PC-9 (cell line): ENCODE measurements at regions of chr12 and their contacts with region 1.

Region 1: DNA sequence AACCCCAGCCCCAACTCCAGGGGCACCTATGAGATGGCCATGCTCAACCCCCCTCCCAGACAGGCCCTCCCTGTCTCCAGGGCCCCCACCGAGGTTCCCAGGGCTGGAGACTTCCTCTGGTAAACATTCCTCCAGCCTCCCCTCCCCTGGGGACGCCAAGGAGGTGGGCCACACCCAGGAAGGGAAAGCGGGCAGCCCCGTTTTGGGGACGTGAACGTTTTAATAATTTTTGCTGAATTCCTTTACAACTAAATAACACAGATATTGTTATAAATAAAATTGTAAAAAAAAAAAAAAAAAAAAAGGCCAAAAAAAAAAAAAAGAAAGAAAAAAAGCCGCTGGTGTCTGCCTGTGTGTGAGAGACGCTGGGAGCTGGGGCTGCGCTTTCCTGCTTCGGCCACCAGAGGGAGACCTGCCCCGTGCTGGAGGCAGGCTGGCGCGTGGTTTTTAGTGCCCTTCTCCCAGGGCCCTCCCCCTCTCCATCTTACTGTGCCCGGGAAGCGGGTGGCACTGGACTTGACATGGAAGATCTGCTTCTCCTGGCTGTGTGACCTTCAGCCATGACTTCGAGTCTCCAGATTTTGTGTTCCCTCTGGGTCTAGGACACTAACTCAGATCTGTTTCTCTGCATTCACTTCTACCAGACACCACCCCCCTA is 3.4 kb upstream of the NXPH4 start:
- DNase-seq: peak; percentile 69 to 92
- H3K4me3 ChIP-seq: peak overlapping the region; percentile 36; the same call in 1 of the 2 replicates
- H3K27ac ChIP-seq: peak overlapping the region; percentile 60
- H3K4me1 ChIP-seq: peaks cover 17% of the 10 kb centered on the region
- H3K27me3 ChIP-seq: no peaks in the 10 kb centered on the region
- CTCF ChIP-seq: peak; percentile 92

Region 2: DNA sequence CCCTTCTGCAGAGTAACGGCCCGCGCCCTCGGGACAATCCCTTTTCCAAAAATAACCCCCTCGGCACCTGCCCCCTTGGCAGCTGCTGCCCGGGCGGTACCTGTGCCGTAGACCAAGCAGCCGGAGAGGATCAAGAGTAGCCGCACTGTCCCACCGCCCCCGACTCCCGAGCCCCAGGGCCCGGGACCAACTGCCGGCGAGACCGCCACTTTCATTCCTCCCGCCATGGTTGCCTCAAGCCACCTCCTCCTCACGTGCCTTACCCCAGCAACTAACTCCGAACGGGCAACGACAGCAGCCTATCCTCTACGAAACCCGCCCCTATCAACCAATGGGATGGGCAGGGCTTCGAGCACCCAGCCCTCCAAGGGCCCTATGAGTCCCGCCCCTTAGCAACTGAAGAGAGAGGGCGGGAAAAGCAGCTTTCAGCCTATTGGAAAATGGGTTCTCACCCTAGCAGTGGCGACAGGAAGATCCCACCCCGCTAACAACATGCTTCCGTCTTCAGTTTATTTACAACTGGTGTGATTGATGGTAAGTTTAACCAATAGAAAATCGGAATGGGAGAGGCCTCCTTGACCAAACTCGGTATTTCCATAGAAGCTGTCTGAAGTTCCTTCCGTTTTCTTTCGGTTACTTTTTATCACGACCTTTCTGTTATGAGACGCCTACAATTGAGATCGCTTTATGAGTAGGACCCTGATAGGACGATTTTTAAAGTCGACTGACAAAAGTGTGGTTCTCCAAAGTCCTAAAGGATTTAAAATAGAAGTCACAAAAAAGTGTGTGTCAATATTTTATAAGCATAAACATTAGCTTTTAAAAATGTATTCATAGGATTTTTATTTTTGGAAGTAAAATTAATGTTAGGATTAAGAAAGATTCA is 134.4 kb before region 1 on chr12 and contains the start of gene NEMP1:
- CTCF ChIA-PET with region 1: interaction called, 3 read pairs
- POLR2A ChIA-PET with region 1: interaction called, 33 read pairs
- intact Hi-C with region 1: no loop called
- DNase-seq: peak; percentile 96 to 100
- H3K4me3 ChIP-seq: peak within 1 kb of the TSS; percentile 90
- H3K27ac ChIP-seq: peak within 1 kb of the TSS; percentile 59
- H3K4me1 ChIP-seq: peaks cover 13% of the 10 kb centered on the region
- H3K27me3 ChIP-seq: no peaks in the 10 kb centered on the region
- CTCF ChIP-seq: no peak
- total RNA-seq, gene NEMP1: 28.9 and 36.6 TPM in 2 replicates

Region 3: GRCh38 chr12:57148469-57149244 is 64.5 kb before region 1 on chr12:
- CTCF ChIA-PET with region 1: no interaction called
- POLR2A ChIA-PET with region 1: interaction called, 25 read pairs
- intact Hi-C with region 1: no loop called
- DNase-seq: no peak
- H3K4me3 ChIP-seq: no peak overlapping the region
- H3K27ac ChIP-seq: no peak overlapping the region
- H3K4me1 ChIP-seq: peaks cover 8% of the 10 kb centered on the region
- H3K27me3 ChIP-seq: no peaks in the 10 kb centered on the region
- CTCF ChIP-seq: no peak

Region 4: DNA sequence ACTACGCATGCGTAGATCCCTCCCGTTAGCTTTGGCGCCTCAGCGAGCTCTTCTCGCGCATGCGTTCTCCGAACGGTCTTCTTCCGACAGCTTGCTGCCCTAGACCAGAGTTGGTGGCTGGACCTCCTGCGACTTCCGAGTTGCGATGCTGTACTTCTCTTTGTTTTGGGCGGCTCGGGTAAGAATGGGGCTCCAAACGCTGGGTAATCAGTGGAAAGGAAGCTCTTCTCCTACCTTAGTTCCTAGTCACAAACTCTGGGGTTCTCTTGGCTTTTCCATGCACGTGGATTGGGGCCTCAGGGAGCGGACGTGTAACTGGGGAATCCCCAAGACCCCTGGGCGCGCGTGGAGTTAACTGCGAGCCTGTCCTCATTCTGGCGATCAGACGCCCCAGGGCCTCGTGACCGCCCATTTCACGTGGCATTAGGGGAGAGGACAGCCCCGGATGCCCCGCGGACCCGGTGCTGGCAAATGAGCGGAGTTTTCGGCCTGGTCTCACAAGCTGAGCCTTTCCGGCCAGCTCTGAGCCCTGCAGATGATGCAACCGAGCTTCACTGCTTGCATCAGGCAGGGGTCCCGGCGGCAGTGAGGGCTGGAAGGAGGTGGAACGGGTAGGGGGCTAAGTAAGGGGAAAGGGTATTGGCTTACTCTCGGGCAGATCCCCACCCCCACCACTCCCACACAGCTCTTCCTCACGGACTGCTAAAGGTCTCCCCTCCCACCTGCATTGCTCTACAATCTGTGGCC is 16.6 kb after region 1 on chr12 and contains the start of gene SHMT2:
- CTCF ChIA-PET with region 1: interaction called, 30 read pairs
- POLR2A ChIA-PET with region 1: interaction called, 3 read pairs
- intact Hi-C with region 1: no loop called
- DNase-seq: peak; percentile 87 to 91
- H3K4me3 ChIP-seq: peak within 1 kb of the TSS; percentile 95
- H3K27ac ChIP-seq: peak within 1 kb of the TSS; percentile 97
- H3K4me1 ChIP-seq: peaks cover 30% of the 10 kb centered on the region
- H3K27me3 ChIP-seq: no peaks in the 10 kb centered on the region
- CTCF ChIP-seq: no peak
- total RNA-seq, gene SHMT2: 220 and 227 TPM in 2 replicates

Region 5: DNA sequence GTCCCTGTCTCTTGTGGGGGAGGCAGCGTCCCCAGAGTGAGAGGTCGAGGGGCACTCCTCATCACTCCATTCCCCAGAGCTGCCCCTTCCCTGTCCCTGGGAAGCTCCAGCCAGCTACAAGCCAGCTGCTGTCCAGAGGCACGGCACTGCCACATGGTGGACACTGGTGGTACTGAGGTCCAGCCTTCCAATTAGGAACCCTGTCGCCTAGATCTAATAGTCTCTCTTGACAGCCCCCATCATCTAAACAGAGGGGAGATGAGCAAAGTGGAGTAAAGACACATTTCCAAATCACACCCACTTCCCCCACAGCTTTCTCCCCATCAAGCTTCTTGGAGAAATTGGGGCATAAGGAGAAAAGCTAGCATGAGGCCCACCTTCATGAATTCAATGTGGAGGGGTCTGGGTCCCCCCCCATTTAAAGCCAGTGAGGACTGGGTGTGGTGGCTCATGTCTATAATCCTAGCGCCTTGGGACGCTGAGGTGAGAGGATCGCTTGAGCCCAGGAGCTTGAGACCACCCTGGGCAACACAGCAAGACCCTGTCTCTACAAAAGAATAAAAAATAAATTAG is 239.8 kb after region 1 on chr12:
- CTCF ChIA-PET with region 1: interaction called, 6 read pairs
- POLR2A ChIA-PET with region 1: no interaction called
- intact Hi-C with region 1: loop called (anchors 2 kb)
- DNase-seq: peak; percentile 47 to 73
- H3K4me3 ChIP-seq: no peak overlapping the region
- H3K27ac ChIP-seq: no peak overlapping the region
- H3K4me1 ChIP-seq: peaks cover 35% of the 10 kb centered on the region
- H3K27me3 ChIP-seq: no peaks in the 10 kb centered on the region
- CTCF ChIP-seq: peak; percentile 91